Activated CD4-positive, alpha-beta memory T cell treated with anti-CD3 and anti-CD28 coated beads for 36 hours (primary cell): ENCODE measurements at regions of chr4 and their contacts with region 1.

Region 1: DNA sequence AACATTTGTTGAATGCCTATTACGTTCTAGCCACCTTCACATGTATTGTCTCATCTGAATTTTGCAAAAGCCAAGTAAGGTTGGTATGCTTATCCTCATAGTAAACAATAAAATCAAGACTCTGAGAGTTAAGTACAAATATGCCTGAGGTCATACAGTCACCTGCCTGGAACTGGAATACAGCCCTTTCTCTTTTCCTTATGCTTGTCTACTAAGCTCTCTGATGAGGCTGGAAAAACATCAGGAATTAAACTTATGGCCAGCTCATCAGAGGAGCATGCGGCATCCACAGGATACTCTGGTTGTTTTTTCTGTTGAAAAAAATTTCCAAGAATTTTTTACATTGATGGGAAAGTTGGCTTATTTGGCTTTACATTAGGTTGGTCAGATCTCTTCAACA is 35.5 kb downstream of the NCAPG start:
- DNase-seq: no peak
- H3K4me3 Mint-ChIP-seq: no peak overlapping the region
- H3K27ac Mint-ChIP-seq: no peak overlapping the region
- H3K4me1 Mint-ChIP-seq: no peaks in the 10 kb centered on the region
- H3K27me3 Mint-ChIP-seq: no peaks in the 10 kb centered on the region

Region 2: GRCh38 chr4:17562160-17562559 is 284.1 kb before region 1 on chr4:
- CTCF ChIA-PET with region 1: no interaction called
- POLR2A ChIA-PET with region 1: no interaction called
- intact Hi-C with region 1: no loop called
- DNase-seq: no peak
- H3K4me3 Mint-ChIP-seq: no peak overlapping the region
- H3K27ac Mint-ChIP-seq: no peak overlapping the region
- H3K4me1 Mint-ChIP-seq: no peaks in the 10 kb centered on the region
- H3K27me3 Mint-ChIP-seq: no peaks in the 10 kb centered on the region

Region 3: GRCh38 chr4:17817020-17817419 is 29.2 kb before region 1 on chr4:
- CTCF ChIA-PET with region 1: interaction called, 13 read pairs
- POLR2A ChIA-PET with region 1: no interaction called
- intact Hi-C with region 1: no loop called
- DNase-seq: no peak
- H3K4me3 Mint-ChIP-seq: no peak overlapping the region
- H3K27ac Mint-ChIP-seq: no peak overlapping the region
- H3K4me1 Mint-ChIP-seq: peaks cover 15% of the 10 kb centered on the region
- H3K27me3 Mint-ChIP-seq: no peaks in the 10 kb centered on the region

Region 4: DNA sequence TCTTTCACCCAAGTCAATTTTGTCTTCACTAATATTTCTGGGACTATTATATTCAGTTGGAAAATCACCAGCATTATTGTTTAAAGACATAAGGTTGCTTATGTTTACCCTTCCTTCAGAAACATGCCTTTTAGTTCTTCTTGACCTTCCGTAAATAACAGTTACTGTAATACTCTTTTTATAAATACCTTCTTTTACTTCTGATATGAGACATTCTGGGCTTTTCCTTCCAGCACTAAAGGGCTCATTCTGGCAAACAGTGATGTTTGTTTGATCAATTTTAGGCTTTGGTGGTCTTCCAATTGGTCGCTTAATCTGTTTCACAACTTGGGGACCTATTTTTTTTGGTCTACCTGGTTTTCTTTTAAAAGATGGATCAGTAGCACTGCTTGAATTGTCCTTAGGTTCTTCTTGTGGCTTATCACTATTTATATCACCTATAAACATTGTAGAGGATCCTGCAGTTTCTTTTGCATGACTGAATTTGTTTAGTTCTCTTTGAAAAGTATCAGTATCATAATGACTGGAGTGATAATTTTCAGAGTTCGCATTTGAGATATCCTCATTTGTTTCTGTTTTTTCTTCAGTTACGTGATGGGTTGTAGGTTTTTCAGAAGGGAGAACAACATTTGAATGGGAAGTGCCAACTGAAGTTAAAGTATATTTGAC is 29.3 kb after region 1 on chr4:
- CTCF ChIA-PET with region 1: no interaction called
- POLR2A ChIA-PET with region 1: no interaction called
- intact Hi-C with region 1: no loop called
- DNase-seq: no peak
- H3K4me3 Mint-ChIP-seq: no peak overlapping the region
- H3K27ac Mint-ChIP-seq: no peak overlapping the region
- H3K4me1 Mint-ChIP-seq: no peaks in the 10 kb centered on the region
- H3K27me3 Mint-ChIP-seq: no peaks in the 10 kb centered on the region